ENCODE measurements at regions of chr12 and their contacts with region 1.

Region 1: GRCh38 chr12:8638961-8639755 is 23.5 kb downstream of the MFAP5 start:
- DNase-seq: no peak
- ATAC-seq: no peak
- H3K4me3 ChIP-seq: no peak overlapping the region
- H3K4me3 Mint-ChIP-seq: no peak overlapping the region
- H3K27ac ChIP-seq: no peak overlapping the region
- H3K27ac Mint-ChIP-seq: peak overlapping the region; percentile 52
- H3K4me1 ChIP-seq: peaks cover 7% of the 10 kb centered on the region
- H3K4me1 Mint-ChIP-seq: peaks cover 8% of the 10 kb centered on the region
- H3K27me3 ChIP-seq: no peaks in the 10 kb centered on the region
- H3K27me3 Mint-ChIP-seq: no peaks in the 10 kb centered on the region
- CTCF ChIP-seq: no peak

Region 2: DNA sequence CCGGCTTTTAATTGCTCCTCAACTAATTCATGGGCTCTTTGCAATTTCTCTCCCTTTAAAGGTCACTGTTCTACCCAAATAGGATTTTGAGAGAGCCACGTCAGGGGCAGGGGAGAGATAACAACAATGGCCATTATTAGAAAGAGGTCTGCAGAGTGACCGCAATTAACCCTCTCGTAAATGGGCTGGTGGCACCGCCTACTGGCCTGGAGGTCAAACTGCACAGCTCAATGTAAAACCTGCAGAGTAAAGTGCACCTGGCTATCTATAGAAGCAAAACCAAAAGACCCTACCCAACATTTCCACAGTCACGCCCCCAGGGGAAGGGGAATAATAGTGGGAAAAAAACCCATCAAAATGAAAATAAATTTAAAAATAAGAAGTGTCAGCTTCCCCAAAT is 76.8 kb before region 1 on chr12:
- CTCF ChIA-PET with region 1: no interaction called
- POLR2A ChIA-PET with region 1: no interaction called
- intact Hi-C with region 1: no loop called
- DNase-seq: no peak
- ATAC-seq: no peak
- H3K4me3 ChIP-seq: no peak overlapping the region
- H3K4me3 Mint-ChIP-seq: no peak overlapping the region
- H3K27ac ChIP-seq: no peak overlapping the region
- H3K27ac Mint-ChIP-seq: no peak overlapping the region
- H3K4me1 ChIP-seq: no peaks in the 10 kb centered on the region
- H3K4me1 Mint-ChIP-seq: no peaks in the 10 kb centered on the region
- H3K27me3 ChIP-seq: no peaks in the 10 kb centered on the region
- H3K27me3 Mint-ChIP-seq: peaks cover 3% of the 10 kb centered on the region
- CTCF ChIP-seq: no peak

Region 3: GRCh38 chr12:8622646-8623045 is 16.5 kb before region 1 on chr12:
- CTCF ChIA-PET with region 1: no interaction called
- POLR2A ChIA-PET with region 1: no interaction called
- intact Hi-C with region 1: loop called in 1 of 2 experiments (anchors 1 kb)
- DNase-seq: no peak
- ATAC-seq: no peak
- H3K4me3 ChIP-seq: no peak overlapping the region
- H3K4me3 Mint-ChIP-seq: no peak overlapping the region
- H3K27ac ChIP-seq: no peak overlapping the region
- H3K27ac Mint-ChIP-seq: no peak overlapping the region
- H3K4me1 ChIP-seq: no peaks in the 10 kb centered on the region
- H3K4me1 Mint-ChIP-seq: no peaks in the 10 kb centered on the region
- H3K27me3 ChIP-seq: no peaks in the 10 kb centered on the region
- H3K27me3 Mint-ChIP-seq: no peaks in the 10 kb centered on the region
- CTCF ChIP-seq: no peak

Measured in CD8-positive, alpha-beta T cell (primary cell).